Sciatic nerve (tissue), 2 donors: ENCODE measurements at regions of chr16 and their contacts with region 1.

Region 1: DNA sequence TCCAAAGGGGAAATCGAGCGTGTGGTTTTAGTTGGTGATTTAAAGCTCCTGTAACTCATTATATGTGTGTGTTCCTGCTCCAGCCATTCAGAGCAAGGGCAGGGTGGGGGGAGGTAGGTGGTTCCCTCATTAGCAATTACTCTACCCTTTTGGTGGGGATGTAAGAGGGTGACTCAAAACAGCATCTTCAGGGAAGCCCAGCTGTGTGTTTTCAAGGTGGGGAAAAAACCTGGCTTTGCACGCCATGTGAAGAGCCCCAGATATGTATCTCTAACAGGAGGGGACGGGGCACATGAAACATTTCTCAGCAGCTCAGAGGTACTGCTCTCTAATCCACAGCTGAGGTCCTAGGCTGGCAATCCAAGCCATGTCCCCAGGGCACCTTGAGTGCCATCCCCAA is 241.3 kb upstream of the ZFHX3 start:
- DNase-seq: no peak
- ATAC-seq: no peak

Region 2: GRCh38 chr16:73265124-73265838 is 24.0 kb before region 1 on chr16:
- intact Hi-C with region 1: loop called (anchors 1 kb)
- DNase-seq: no peak
- ATAC-seq: no peak

Region 3: DNA sequence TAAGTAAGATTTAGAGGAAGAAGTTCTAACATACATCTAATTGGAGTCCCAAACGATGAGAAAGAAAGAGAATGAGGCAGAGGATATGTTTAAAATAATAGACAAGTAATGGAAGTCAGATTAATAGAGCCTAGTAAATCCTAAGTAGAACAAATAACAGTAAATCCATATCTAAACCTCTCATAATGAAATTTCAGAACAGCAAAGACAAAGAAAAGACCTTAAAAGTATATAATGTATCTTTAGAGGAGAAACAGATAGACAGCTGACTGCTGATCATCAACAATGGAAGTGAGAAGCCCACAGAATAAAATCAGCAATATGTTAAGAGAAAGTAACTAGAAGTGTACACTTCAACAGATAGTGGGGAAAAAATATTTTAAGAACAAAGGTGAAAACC is 294.9 kb after region 1 on chr16:
- intact Hi-C with region 1: no loop called
- DNase-seq: no peak
- ATAC-seq: no peak

Region 4: GRCh38 chr16:73670836-73671820 is 381.9 kb after region 1 on chr16:
- intact Hi-C with region 1: no loop called
- DNase-seq: no peak
- ATAC-seq: no peak